Heart left ventricle (tissue), 16 donors: ENCODE measurements at regions of chr5 and their contacts with region 1.

Region 1: DNA sequence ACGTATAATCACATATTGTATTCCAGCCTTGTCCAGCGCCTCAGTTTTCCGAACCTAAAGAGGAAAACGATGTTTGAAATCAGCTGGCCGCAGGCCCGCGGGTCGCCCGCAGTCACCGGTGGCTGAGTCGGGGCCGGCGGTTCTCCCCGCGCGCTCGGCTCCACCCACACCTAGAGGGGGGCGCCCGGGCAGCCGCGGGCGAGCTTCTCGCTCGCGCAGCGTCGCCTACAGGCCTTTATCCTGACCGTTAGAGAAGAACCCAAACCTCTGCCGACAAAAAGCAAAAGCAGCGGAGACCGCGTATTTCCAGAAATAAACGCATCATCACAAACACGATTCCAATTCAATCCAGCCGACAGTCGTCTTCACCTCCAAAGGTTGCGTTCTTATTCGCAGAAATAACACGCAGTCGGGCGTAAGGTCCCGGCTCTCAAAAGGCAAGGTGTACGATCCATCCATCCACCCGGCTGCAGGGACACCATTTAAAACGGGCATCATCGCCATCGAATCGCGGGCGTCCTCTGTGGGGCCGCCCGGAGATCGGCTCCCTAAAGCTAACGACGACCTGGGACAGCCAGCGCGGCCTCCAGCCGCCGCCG is 680 bp upstream of the NIPBL start:
- DNase-seq: peak; percentile 83 to 90 (median 85)
- ATAC-seq: peak; percentile 84 to 90 (median 87)
- H3K4me3 ChIP-seq: peak overlapping the region; percentile 77 to 98 (median 91)
- H3K27ac ChIP-seq: peak overlapping the region; percentile 94 to 98 (median 96)
- H3K4me1 ChIP-seq: peaks cover 5 to 62% (median 43%) of the 10 kb centered on the region in 12 donors
- H3K27me3 ChIP-seq: no peaks in the 10 kb centered on the region
- CTCF ChIP-seq: peak; percentile 22 to 86 (median 56)
- POLR2A ChIP-seq: no peak

Region 2: DNA sequence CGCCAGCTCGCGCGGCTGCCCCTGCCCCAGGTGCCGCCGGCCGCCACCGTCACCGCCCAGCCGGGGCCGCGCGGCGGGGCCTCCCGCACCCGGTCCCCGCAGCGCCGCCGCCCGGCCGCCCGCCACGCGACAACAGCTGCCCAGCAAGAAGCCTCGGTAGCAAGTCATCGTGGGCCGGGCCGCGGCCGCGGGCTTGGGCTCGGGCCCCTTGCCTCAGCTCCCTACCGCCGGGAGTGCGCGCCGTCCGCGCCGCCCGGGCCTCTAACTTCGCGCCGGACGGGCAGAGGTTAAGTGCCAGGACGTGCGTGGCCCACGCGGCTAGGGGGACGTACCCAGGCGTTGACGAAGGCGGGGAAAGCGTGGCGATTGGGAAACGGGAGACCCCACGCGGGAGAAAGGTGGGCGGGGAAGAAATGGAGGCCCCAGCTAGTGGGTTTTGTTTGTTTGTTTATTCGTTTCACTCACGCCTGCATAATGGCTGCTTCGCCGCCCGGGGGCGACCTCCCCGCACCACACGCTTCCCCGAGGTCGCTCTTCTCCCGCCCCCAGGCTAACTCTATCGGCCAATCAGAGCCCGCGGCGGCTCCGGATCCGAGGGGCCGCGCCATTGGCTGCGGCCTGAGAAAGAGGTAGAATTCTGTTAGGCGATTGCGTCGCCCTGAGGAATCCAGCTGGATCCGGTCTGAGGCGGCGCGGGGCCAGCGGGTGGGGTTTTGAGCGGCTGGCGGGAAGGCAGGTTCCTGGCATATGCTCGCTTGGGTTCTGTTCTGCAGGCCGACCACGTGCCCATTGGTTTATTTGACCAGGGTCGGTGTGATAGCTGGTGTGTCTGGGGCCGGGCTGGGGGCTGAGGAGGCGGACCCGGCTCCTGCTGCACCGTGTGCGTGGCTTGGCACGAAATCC is 634.0 kb before region 1 on chr5 and contains the start of gene NADK2:
- intact Hi-C with region 1: loop called in 2 of 10 experiments (anchors 10 kb)
- DNase-seq: peak; percentile 96 to 97 (median 96)
- ATAC-seq: peak; percentile 93 to 96 (median 94)
- H3K4me3 ChIP-seq: peak within 1 kb of the TSS; percentile 46 to 97 (median 90)
- H3K27ac ChIP-seq: peak within 1 kb of the TSS; percentile 86 to 99 (median 96)
- H3K4me1 ChIP-seq: peaks cover 0 to 44% (median 36%) of the 10 kb centered on the region in 12 donors
- H3K27me3 ChIP-seq: no peaks in the 10 kb centered on the region
- CTCF ChIP-seq: peak; percentile 65 to 89 (median 72)
- POLR2A ChIP-seq: peak; percentile 70 to 86
- total RNA-seq, gene NADK2: 25.8 to 41.8 (median 37.2) TPM

Region 3: DNA sequence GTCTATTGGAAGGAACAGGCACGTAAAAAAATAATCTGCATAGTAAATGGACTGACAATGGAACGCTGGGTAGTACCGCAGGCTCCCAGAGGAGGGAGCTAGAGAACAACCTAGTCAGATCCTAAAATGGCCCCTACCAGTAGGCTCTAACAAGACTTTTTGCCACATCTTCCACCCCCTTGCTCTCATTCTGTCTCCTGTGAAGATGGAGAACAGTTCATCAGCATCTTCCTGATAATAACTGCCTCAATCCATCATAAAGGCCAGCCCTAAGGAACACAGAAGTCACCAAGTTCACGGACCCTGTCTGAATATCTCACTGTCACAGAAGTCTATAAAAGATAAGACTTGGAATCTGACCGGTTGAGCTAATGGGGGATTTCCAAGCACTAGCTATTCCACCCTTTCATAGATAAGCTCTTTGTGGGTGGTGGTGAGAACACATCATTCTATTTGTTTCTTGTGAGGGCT is 136.1 kb before region 1 on chr5:
- intact Hi-C with region 1: loop called in 8 of 10 experiments (anchors 2 to 10 kb)
- DNase-seq: peak; percentile 18 to 66 (median 43)
- ATAC-seq: peak; percentile 15 to 53 (median 45)
- H3K4me3 ChIP-seq: no peak overlapping the region
- H3K27ac ChIP-seq: no peak overlapping the region
- H3K4me1 ChIP-seq: peaks cover 0 to 17% (median 5%) of the 10 kb centered on the region in 12 donors
- H3K27me3 ChIP-seq: peaks cover 0 to 24% (median 0%) of the 10 kb centered on the region in 9 donors
- CTCF ChIP-seq: peak; percentile 46 to 74 (median 66)
- POLR2A ChIP-seq: no peak

Region 4: GRCh38 chr5:36934740-36935356 is 59.0 kb after region 1 on chr5:
- intact Hi-C with region 1: loop called in 9 of 10 experiments (anchors 5 to 10 kb)
- DNase-seq: no peak
- ATAC-seq: no peak
- H3K4me3 ChIP-seq: no peak overlapping the region
- H3K27ac ChIP-seq: no peak overlapping the region
- H3K4me1 ChIP-seq: peaks cover 0 to 59% (median 33%) of the 10 kb centered on the region in 12 donors
- H3K27me3 ChIP-seq: no peaks in the 10 kb centered on the region
- CTCF ChIP-seq: no peak
- POLR2A ChIP-seq: no peak

Region 5: GRCh38 chr5:36944607-36945225 is 68.8 kb after region 1 on chr5:
- intact Hi-C with region 1: loop called (anchors 2 to 10 kb)
- DNase-seq: no peak
- ATAC-seq: no peak
- H3K4me3 ChIP-seq: no peak overlapping the region
- H3K27ac ChIP-seq: no peak overlapping the region
- H3K4me1 ChIP-seq: peaks cover 0 to 68% (median 41%) of the 10 kb centered on the region in 12 donors
- H3K27me3 ChIP-seq: no peaks in the 10 kb centered on the region
- CTCF ChIP-seq: peak; percentile 39 to 71 (median 58)
- POLR2A ChIP-seq: no peak

Region 6: DNA sequence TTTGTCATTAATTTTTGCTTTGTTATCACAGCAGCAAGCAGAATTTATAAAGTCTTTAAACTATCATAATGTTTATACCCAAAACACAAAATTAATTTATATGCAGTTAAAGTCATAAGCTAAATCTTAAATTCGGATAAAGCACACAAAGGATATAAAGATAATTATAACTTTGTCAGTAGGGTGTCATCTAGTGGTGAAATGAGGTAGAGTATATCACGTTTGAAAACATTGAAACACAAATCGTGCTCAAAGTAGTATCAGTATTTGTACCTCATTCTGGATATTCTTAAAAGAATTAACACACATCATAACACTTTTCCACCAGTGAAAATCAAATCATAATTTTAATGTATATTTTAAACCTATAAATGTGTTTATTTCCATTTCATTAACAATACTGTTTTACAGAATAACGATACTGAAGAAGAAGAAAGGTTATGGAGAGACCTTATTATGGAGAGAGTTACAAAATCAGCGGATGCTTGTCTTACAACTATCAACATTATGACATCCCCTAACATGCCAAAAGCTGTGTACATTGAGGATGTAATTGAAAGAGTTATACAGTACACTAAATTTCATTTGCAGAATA is 130.2 kb after region 1 on chr5:
- intact Hi-C with region 1: loop called in 3 of 10 experiments (anchors 10 kb)
- DNase-seq: no peak
- ATAC-seq: no peak
- H3K4me3 ChIP-seq: no peak overlapping the region
- H3K27ac ChIP-seq: no peak overlapping the region
- H3K4me1 ChIP-seq: no peaks in the 10 kb centered on the region
- H3K27me3 ChIP-seq: no peaks in the 10 kb centered on the region
- CTCF ChIP-seq: peak; percentile 43 to 78 (median 66)
- POLR2A ChIP-seq: no peak

Region 7: GRCh38 chr5:37370864-37371726 is 495.2 kb after region 1 on chr5 and contains the start of gene NUP155:
- intact Hi-C with region 1: loop called in 1 of 10 experiments (anchors 5 kb)
- DNase-seq: peak; percentile 93 to 95 (median 93)
- ATAC-seq: peak; percentile 99
- H3K4me3 ChIP-seq: peak within 1 kb of the TSS; percentile 57 to 94 (median 85)
- H3K27ac ChIP-seq: peak within 1 kb of the TSS; percentile 11 to 92 (median 82)
- H3K4me1 ChIP-seq: peaks cover 10 to 30% (median 24%) of the 10 kb centered on the region in 12 donors
- H3K27me3 ChIP-seq: no peaks in the 10 kb centered on the region
- CTCF ChIP-seq: no peak
- POLR2A ChIP-seq: peak in 1 of 2 donors; percentile 63
- total RNA-seq, gene NUP155: 9.7 to 17.4 (median 12.4) TPM